ENCODE measurements at regions of chr9 and their contacts with region 1.

Region 1: GRCh38 chr9:21104787-21105186 is 27.0 kb upstream of the IFNB1 start:
- DNase-seq: no peak
- H3K4me3 Mint-ChIP-seq: no peak overlapping the region
- H3K27ac Mint-ChIP-seq: no peak overlapping the region
- H3K4me1 Mint-ChIP-seq: no peaks in the 10 kb centered on the region
- H3K27me3 Mint-ChIP-seq: no peaks in the 10 kb centered on the region
- CTCF ChIP-seq: no peak

Region 2: DNA sequence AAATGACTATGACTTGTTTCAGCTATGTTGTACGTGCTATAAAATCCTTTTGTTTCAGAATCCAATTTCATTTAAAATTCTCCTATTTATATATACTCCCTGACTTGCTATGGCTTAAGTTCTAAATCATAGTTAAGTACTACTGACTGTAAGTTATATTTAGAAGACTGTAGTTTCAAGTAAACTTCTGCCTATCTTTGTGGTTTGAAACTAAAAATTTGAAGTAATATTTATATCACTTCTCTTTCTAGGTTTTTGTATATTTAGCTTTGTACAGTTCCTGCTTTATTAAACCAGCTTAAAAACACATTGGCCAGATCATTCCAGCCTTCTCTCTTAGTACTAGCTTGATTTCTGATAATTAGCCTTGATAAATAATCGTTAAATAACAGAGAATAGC is 678.8 kb before region 1 on chr9:
- CTCF ChIA-PET with region 1: no interaction called
- POLR2A ChIA-PET with region 1: no interaction called
- intact Hi-C with region 1: loop called (anchors 5 kb)
- DNase-seq: no peak
- H3K4me3 Mint-ChIP-seq: no peak overlapping the region
- H3K27ac Mint-ChIP-seq: no peak overlapping the region
- H3K4me1 Mint-ChIP-seq: no peaks in the 10 kb centered on the region
- H3K27me3 Mint-ChIP-seq: peaks cover 65% of the 10 kb centered on the region
- CTCF ChIP-seq: no peak

Region 3: GRCh38 chr9:21933865-21934264 is 829.1 kb after region 1 on chr9:
- CTCF ChIA-PET with region 1: no interaction called
- POLR2A ChIA-PET with region 1: no interaction called
- intact Hi-C with region 1: no loop called
- DNase-seq: no peak
- H3K4me3 Mint-ChIP-seq: no peak overlapping the region
- H3K27ac Mint-ChIP-seq: no peak overlapping the region
- H3K4me1 Mint-ChIP-seq: no peaks in the 10 kb centered on the region
- H3K27me3 Mint-ChIP-seq: no peaks in the 10 kb centered on the region
- CTCF ChIP-seq: no peak